Activated naive CD4-positive, alpha-beta T cell treated with anti-CD3 and anti-CD28 coated beads, Interleukin-2, amount 10 ng/mL, durations not matched to agents 7 days and 5 days (primary cell): ENCODE measurements at regions of chr5 and their contacts with region 1.

Region 1: GRCh38 chr5:134738133-134738962 is at the start of gene CAMLG:
- DNase-seq: peak; percentile 98
- H3K4me3 Mint-ChIP-seq: peak within 1 kb of the TSS; percentile 85
- H3K27ac Mint-ChIP-seq: peak within 1 kb of the TSS; percentile 86
- H3K4me1 Mint-ChIP-seq: peaks cover 42% of the 10 kb centered on the region
- H3K27me3 Mint-ChIP-seq: no peaks in the 10 kb centered on the region

Region 2: GRCh38 chr5:134649163-134649835 is 89.0 kb before region 1 on chr5:
- CTCF ChIA-PET with region 1: no interaction called
- DNase-seq: peak; percentile 34
- H3K4me3 Mint-ChIP-seq: peak overlapping the region; percentile 93
- H3K27ac Mint-ChIP-seq: peak overlapping the region; percentile 99
- H3K4me1 Mint-ChIP-seq: peaks cover 35% of the 10 kb centered on the region
- H3K27me3 Mint-ChIP-seq: no peaks in the 10 kb centered on the region

Region 3: GRCh38 chr5:134758504-134759341 is 20.4 kb after region 1 on chr5 and contains the start of gene DDX46:
- CTCF ChIA-PET with region 1: interaction called, 30 read pairs
- DNase-seq: peak; percentile 96
- H3K4me3 Mint-ChIP-seq: peak within 1 kb of the TSS; percentile 100
- H3K27ac Mint-ChIP-seq: peak within 1 kb of the TSS; percentile 97
- H3K4me1 Mint-ChIP-seq: peaks cover 39% of the 10 kb centered on the region
- H3K27me3 Mint-ChIP-seq: no peaks in the 10 kb centered on the region

Region 4: GRCh38 chr5:134904630-134905245 is 166.4 kb after region 1 on chr5 and contains the start of gene PCBD2:
- CTCF ChIA-PET with region 1: interaction called, 14 read pairs
- DNase-seq: peak; percentile 94
- H3K4me3 Mint-ChIP-seq: peak within 1 kb of the TSS; percentile 98
- H3K27ac Mint-ChIP-seq: peak within 1 kb of the TSS; percentile 99
- H3K4me1 Mint-ChIP-seq: peaks cover 29% of the 10 kb centered on the region
- H3K27me3 Mint-ChIP-seq: no peaks in the 10 kb centered on the region